Tibial artery (tissue), 4 donors: ENCODE measurements at regions of chr10 and their contacts with region 1.

Region 1: DNA sequence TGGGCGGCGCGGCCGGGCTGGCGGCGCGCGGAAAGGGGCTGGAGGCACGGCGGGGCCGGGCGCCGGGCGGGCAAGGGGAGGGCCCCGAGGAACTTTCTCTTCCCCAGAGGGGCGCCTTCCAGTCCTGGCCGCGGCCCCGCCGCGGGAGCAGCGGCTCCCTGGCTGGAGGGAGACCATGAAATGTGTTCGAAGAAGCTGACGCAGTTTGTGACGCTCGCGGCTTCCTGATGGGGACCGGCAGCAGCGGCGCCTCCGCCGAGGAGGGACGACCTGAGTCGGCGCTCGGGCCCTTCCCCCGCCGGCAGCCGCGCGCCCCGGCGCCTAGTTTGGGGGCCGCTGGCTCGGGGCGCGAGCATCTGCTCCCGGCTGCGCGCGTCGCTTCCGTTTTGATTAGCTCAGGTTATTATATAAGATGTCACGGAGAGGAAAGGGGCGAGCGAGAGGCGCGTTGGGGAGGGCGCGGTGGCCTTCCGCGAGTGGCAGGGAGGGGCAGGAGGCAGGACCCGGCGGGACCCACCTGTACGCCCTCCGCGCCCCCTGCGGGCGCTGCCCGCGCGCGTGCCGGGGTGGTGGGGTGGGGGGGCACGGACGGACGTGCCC is 57.1 kb upstream of the PCGF5 start:
- DNase-seq: peak; percentile 52 to 84
- H3K4me3 ChIP-seq: peak overlapping the region; percentile 64 to 95
- H3K27ac ChIP-seq: peak overlapping the region; percentile 92 to 100
- H3K4me1 ChIP-seq: peaks cover 0 to 35% (median 19%) of the 10 kb centered on the region in 4 donors
- H3K27me3 ChIP-seq: no peaks in the 10 kb centered on the region
- CTCF ChIP-seq: no peak

Region 2: DNA sequence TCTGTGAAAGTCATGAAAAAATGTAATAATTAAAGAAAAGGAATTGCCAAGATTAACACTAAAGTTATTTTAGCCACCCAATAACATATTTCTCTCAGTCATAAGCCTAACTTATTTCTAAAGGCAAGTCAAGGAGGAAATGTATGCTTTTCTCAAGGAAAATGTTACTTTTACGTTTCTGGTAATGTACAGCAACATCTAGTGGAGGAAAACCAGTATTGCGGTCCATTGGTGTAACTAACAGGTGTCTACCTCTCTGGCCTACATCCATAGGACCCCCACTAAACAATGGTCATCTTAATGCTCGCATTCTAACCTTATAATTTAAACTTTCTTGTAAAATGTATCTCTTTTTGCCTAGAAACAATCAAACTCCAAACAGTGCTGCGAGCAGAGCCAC is 1024.5 kb before region 1 on chr10:
- intact Hi-C with region 1: no loop called
- DNase-seq: no peak
- H3K4me3 ChIP-seq: no peak overlapping the region
- H3K27ac ChIP-seq: no peak overlapping the region
- H3K4me1 ChIP-seq: no peaks in the 10 kb centered on the region
- H3K27me3 ChIP-seq: no peaks in the 10 kb centered on the region
- CTCF ChIP-seq: no peak

Region 3: DNA sequence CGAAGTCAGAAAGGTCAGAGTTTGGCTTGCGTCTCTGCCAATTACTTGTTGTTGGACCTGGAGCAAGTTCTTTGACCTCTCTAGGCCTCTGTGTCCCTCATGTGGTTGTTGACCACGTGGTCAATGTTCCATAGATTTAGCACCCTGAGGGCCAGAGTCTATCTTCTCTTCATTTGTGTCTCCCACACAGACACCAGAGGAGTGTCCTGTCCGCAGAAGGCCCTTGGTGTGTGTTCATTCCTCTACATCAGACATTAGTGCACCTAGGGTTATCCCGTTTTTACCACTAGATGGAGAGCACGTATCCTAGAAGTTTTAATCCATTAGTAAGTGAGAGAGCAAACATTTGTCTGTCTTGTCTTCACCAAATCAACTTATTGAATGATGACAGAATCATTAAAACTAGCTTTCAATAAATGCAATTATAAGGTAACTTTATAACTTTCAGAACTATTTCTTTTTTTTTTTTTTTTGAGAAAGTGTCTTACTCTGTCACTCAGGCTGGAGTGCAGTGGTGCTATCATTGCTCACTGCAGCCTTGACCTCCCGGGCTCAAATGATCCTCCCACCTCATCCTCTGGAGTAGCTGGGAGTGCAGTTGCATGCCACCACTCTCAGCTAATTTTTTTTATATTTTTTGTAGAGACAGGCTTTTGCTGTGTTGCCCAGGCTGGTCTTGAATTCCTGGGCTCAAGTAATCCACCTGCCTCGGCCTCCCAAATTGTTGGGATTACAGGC is 120.0 kb before region 1 on chr10:
- intact Hi-C with region 1: loop called (anchors 10 kb)
- DNase-seq: no peak
- H3K4me3 ChIP-seq: no peak overlapping the region
- H3K27ac ChIP-seq: peak overlapping the region in 1 of 2 donors; percentile 14
- H3K4me1 ChIP-seq: peaks cover 0 to 27% (median 7%) of the 10 kb centered on the region in 4 donors
- H3K27me3 ChIP-seq: no peaks in the 10 kb centered on the region
- CTCF ChIP-seq: peak; percentile 64 to 70

Region 4: DNA sequence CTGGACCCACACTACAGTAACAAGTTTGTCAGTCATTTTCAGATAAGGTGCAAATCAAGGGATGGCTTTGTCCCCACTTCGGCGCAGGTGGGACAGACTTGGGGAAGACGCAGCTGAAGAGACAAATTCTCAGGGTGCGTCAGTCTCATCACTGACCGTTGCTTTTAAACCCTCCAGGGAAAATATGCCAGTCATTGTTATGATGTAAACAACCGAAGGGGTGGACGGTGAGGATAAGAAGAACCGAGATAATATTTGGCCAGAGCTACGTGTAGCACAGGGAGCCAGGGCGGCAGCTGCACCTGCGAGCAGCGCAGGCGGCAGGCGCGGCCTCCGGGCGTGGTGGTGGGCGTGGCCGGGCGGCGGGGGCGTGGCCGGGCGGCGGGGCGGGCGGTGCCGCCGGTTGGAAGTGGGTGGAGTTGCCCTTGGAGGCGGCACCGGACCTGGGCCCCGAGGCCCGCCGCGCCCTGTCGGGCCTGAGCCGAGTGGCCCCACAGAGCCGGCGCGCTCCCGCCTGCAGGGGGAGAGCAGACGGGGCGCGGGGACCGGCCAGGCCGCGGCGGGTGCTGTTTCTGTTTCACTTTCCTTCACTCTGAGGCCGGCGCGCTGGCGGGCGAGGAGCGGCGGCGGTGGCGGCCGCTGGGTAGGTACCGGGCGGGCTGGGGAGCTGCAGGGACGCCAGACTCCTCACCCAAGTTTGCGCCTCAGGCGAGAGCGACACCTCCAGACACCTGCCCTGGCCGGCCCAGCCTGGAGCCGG is 57.0 kb after region 1 on chr10 and contains the start of gene PCGF5:
- intact Hi-C with region 1: loop called (anchors 10 kb)
- DNase-seq: peak; percentile 84 to 95
- H3K4me3 ChIP-seq: peak within 1 kb of the TSS; percentile 89 to 92
- H3K27ac ChIP-seq: peak within 1 kb of the TSS; percentile 87 to 91
- H3K4me1 ChIP-seq: peaks cover 0 to 68% (median 28%) of the 10 kb centered on the region in 4 donors
- H3K27me3 ChIP-seq: no peaks in the 10 kb centered on the region
- CTCF ChIP-seq: peak; percentile 41 to 55